GM18951 (cell line): ENCODE measurements at regions of chr7 and their contacts with region 1.

Region 1: GRCh38 chr7:120996333-120996987 is 7.9 kb downstream of the CPED1 start:
- POLR2A ChIP-seq: no peak

Region 2: GRCh38 chr7:121107923-121108498 is 111.6 kb after region 1 on chr7:
- in situ Hi-C with region 1: loop called (anchors 10 kb)
- POLR2A ChIP-seq: no peak